Breast epithelium (tissue), 4 donors: ENCODE measurements at regions of chr12 and their contacts with region 1.

Region 1: DNA sequence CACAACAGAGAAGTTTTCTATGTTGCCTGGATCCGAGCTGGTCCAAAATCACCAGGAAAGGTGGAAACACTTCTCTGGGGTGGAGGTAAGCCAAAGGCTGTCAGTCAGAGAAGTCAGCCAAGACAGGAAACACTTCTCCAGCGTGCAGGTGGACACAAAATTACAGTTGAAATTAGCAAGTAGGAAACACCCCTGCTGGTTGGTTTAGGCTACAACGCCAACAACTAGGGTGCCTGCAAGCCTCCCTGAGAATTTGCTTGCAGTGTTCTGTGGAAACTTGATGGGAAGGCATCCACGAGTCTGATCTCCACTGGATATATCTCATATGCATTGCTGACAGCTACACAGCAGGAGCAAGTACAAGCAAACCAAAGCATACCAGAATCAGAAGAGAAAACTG is 600.5 kb downstream of the RERGL start:
- DNase-seq: no peak
- H3K4me3 ChIP-seq: no peak overlapping the region
- H3K27ac ChIP-seq: no peak overlapping the region
- H3K4me1 ChIP-seq: no peaks in the 10 kb centered on the region
- H3K27me3 ChIP-seq: no peaks in the 10 kb centered on the region
- CTCF ChIP-seq: no peak
- POLR2A ChIP-seq: no peak

Region 2: DNA sequence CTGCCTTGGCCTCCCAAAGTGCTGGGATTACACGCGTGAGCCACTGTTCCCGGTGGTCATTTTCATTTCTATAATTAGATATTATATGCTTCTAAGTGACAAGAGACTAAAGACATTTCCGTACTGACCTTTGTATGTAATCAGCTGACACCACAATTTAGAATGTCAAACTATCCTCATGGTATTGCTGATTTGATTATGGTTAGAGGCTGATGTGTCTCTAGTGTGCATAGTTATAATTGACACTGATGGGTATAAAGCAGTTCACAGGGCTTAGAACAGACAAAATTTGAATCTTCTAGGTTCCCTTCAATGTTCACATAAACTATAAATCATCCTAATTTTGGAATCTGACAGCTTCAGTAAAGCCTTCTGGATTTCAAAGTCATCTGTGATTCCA is 1974.4 kb before region 1 on chr12:
- intact Hi-C with region 1: no loop called
- DNase-seq: no peak
- H3K4me3 ChIP-seq: no peak overlapping the region
- H3K27ac ChIP-seq: no peak overlapping the region
- H3K4me1 ChIP-seq: no peaks in the 10 kb centered on the region
- H3K27me3 ChIP-seq: no peaks in the 10 kb centered on the region
- CTCF ChIP-seq: no peak
- POLR2A ChIP-seq: no peak

Region 3: GRCh38 chr12:17456486-17456885 is 33.0 kb before region 1 on chr12:
- intact Hi-C with region 1: loop called (anchors 2 kb)
- DNase-seq: no peak
- H3K4me3 ChIP-seq: no peak overlapping the region
- H3K27ac ChIP-seq: no peak overlapping the region
- H3K4me1 ChIP-seq: no peaks in the 10 kb centered on the region
- H3K27me3 ChIP-seq: no peaks in the 10 kb centered on the region
- CTCF ChIP-seq: no peak
- POLR2A ChIP-seq: no peak